B cell (primary cell): ENCODE measurements at regions of chr14 and their contacts with region 1.

Region 1: GRCh38 chr14:70714055-70714621 is 72.4 kb downstream of the TTC9 start:
- DNase-seq: peak; percentile 80
- ATAC-seq: peak; percentile 31
- H3K4me3 ChIP-seq: no peak overlapping the region
- H3K4me3 Mint-ChIP-seq: peak overlapping the region; percentile 0
- H3K27ac ChIP-seq: no peak overlapping the region
- H3K27ac Mint-ChIP-seq: peak overlapping the region; percentile 0
- H3K4me1 ChIP-seq: peaks cover 21 to 26% of the 10 kb centered on the region in 2 donors
- H3K4me1 Mint-ChIP-seq: peaks cover 37% of the 10 kb centered on the region
- H3K27me3 ChIP-seq: no peaks in the 10 kb centered on the region
- H3K27me3 Mint-ChIP-seq: no peaks in the 10 kb centered on the region
- CTCF ChIP-seq: peak; percentile 91

Region 2: DNA sequence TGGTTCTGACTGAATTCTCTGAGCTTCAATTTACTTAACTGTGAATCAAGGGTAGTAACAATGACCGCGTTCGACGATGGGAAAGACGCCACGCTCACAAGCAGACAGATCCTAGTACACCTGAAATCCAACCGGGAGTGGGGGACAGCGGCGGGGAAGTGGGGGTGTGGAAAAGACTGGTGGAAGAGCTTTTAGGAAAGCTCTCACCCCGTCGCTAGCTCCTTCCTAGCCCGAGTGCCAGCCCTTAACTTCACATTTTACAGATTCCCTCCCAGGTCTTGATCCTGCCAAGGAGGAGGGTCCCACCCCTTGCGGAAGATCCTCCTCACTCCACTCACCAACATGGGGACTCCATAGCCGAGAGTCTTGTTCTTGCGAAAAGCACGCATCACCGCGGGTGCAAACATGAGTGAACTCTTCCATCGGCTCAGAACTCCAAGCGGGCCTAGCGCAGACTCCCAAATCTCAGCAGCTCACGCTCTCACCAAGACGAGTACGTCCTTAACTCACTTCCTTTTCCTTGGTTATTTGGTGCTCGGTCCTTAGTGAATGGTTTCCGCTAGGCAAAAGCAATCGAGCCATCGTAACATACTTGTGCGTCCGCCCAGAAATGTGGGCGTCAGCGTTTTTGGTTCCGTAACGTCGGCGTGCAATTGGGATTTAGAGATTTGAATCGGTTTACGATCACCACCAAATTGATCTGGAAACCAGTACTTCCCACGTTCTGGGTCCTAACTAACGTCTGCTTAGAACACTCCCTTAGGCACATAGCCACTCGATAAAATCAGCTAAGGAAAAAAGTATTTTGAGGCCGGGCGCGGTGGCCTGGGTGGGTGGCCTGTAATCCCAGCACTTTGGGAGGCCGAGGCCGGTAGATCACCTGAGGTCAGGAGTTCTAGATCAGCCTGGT is 354.7 kb before region 1 on chr14 and contains the start of gene COX16:
- CTCF ChIA-PET with region 1: no interaction called
- POLR2A ChIA-PET with region 1: no interaction called
- intact Hi-C with region 1: no loop called
- DNase-seq: peak; percentile 92
- ATAC-seq: peak; percentile 94
- H3K4me3 ChIP-seq: peak within 1 kb of the TSS; percentile 83 to 98 (median 92)
- H3K4me3 Mint-ChIP-seq: peak within 1 kb of the TSS; percentile 100
- H3K27ac ChIP-seq: peak within 1 kb of the TSS; percentile 62 to 79
- H3K27ac Mint-ChIP-seq: peak within 1 kb of the TSS; percentile 97
- H3K4me1 ChIP-seq: peaks cover 11 to 15% of the 10 kb centered on the region in 2 donors
- H3K4me1 Mint-ChIP-seq: peaks cover 41% of the 10 kb centered on the region
- H3K27me3 ChIP-seq: peaks cover 0 to 3% (median 0%) of the 10 kb centered on the region in 4 experiments
- H3K27me3 Mint-ChIP-seq: peaks cover 10% of the 10 kb centered on the region
- CTCF ChIP-seq: no peak
- total RNA-seq, gene COX16: 24.6 and 31.2 TPM in 2 replicates

Region 3: GRCh38 chr14:70600382-70601157 is 113.6 kb before region 1 on chr14 and contains the start of gene MED6:
- CTCF ChIA-PET with region 1: interaction called, 16 read pairs
- POLR2A ChIA-PET with region 1: interaction called, 3 read pairs
- intact Hi-C with region 1: loop called (anchors 1 kb)
- DNase-seq: peak; percentile 93
- ATAC-seq: peak; percentile 98
- H3K4me3 ChIP-seq: peak within 1 kb of the TSS; percentile 67 to 100 (median 98)
- H3K4me3 Mint-ChIP-seq: peak within 1 kb of the TSS; percentile 99
- H3K27ac ChIP-seq: peak within 1 kb of the TSS; percentile 69 to 94
- H3K27ac Mint-ChIP-seq: peak within 1 kb of the TSS; percentile 97
- H3K4me1 ChIP-seq: peaks cover 25 to 26% of the 10 kb centered on the region in 2 donors
- H3K4me1 Mint-ChIP-seq: peaks cover 27% of the 10 kb centered on the region
- H3K27me3 ChIP-seq: no peaks in the 10 kb centered on the region
- H3K27me3 Mint-ChIP-seq: no peaks in the 10 kb centered on the region
- CTCF ChIP-seq: no peak
- total RNA-seq, gene MED6: 68.3 and 71.0 TPM in 2 replicates

Region 4: GRCh38 chr14:70631951-70632350 is 82.2 kb before region 1 on chr14:
- CTCF ChIA-PET with region 1: interaction called, 21 read pairs
- POLR2A ChIA-PET with region 1: no interaction called
- intact Hi-C with region 1: no loop called
- DNase-seq: no peak
- ATAC-seq: no peak
- H3K4me3 ChIP-seq: no peak overlapping the region
- H3K4me3 Mint-ChIP-seq: no peak overlapping the region
- H3K27ac ChIP-seq: no peak overlapping the region
- H3K27ac Mint-ChIP-seq: no peak overlapping the region
- H3K4me1 ChIP-seq: peaks cover 9 to 15% of the 10 kb centered on the region in 2 donors
- H3K4me1 Mint-ChIP-seq: peaks cover 12% of the 10 kb centered on the region
- H3K27me3 ChIP-seq: no peaks in the 10 kb centered on the region
- H3K27me3 Mint-ChIP-seq: no peaks in the 10 kb centered on the region
- CTCF ChIP-seq: no peak

Region 5: GRCh38 chr14:70665191-70665916 is 48.8 kb before region 1 on chr14:
- CTCF ChIA-PET with region 1: interaction called, 27 read pairs
- POLR2A ChIA-PET with region 1: interaction called, 3 read pairs
- intact Hi-C with region 1: loop called (anchors 2 kb)
- DNase-seq: peak; percentile 75
- ATAC-seq: peak; percentile 61
- H3K4me3 ChIP-seq: peak overlapping the region in 3 of 5 experiments; percentile 13 to 41 (median 16)
- H3K4me3 Mint-ChIP-seq: peak overlapping the region; percentile 65
- H3K27ac ChIP-seq: peak overlapping the region; percentile 79 to 89
- H3K27ac Mint-ChIP-seq: peak overlapping the region; percentile 89
- H3K4me1 ChIP-seq: peaks cover 94 to 100% of the 10 kb centered on the region in 2 donors
- H3K4me1 Mint-ChIP-seq: peaks cover 97% of the 10 kb centered on the region
- H3K27me3 ChIP-seq: no peaks in the 10 kb centered on the region
- H3K27me3 Mint-ChIP-seq: no peaks in the 10 kb centered on the region
- CTCF ChIP-seq: no peak

Region 6: GRCh38 chr14:70700952-70701585 is 13.1 kb before region 1 on chr14:
- CTCF ChIA-PET with region 1: interaction called, 10 read pairs
- POLR2A ChIA-PET with region 1: interaction called, 3 read pairs
- intact Hi-C with region 1: no loop called
- DNase-seq: no peak
- ATAC-seq: no peak
- H3K4me3 ChIP-seq: no peak overlapping the region
- H3K4me3 Mint-ChIP-seq: no peak overlapping the region
- H3K27ac ChIP-seq: no peak overlapping the region
- H3K27ac Mint-ChIP-seq: no peak overlapping the region
- H3K4me1 ChIP-seq: no peaks in the 10 kb centered on the region
- H3K4me1 Mint-ChIP-seq: no peaks in the 10 kb centered on the region
- H3K27me3 ChIP-seq: no peaks in the 10 kb centered on the region
- H3K27me3 Mint-ChIP-seq: no peaks in the 10 kb centered on the region
- CTCF ChIP-seq: no peak

Region 7: GRCh38 chr14:70771781-70772212 is 57.7 kb after region 1 on chr14:
- CTCF ChIA-PET with region 1: no interaction called
- POLR2A ChIA-PET with region 1: no interaction called
- intact Hi-C with region 1: no loop called
- DNase-seq: no peak
- ATAC-seq: no peak
- H3K4me3 ChIP-seq: no peak overlapping the region
- H3K4me3 Mint-ChIP-seq: no peak overlapping the region
- H3K27ac ChIP-seq: no peak overlapping the region
- H3K27ac Mint-ChIP-seq: no peak overlapping the region
- H3K4me1 ChIP-seq: no peaks in the 10 kb centered on the region
- H3K4me1 Mint-ChIP-seq: no peaks in the 10 kb centered on the region
- H3K27me3 ChIP-seq: no peaks in the 10 kb centered on the region
- H3K27me3 Mint-ChIP-seq: no peaks in the 10 kb centered on the region
- CTCF ChIP-seq: no peak

Region 8: DNA sequence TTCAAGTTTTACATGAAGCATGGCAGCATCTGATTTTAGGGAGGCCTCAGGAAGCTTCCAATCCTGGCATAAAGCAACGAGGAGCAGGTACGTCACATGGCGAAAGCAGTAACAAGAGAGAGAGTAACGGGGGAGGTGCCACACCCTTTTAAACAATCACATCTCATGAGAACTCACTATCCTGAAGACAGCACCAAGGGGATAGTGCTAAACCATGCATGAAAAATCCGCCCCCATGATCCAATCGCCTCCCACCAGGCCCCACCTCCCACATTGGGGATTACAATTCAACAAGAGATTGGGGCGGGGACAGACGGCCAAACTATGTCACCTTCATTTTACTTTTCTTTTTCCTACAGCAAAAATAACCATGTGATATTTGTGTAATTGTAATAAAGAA is 102.4 kb after region 1 on chr14:
- CTCF ChIA-PET with region 1: interaction called, 52 read pairs
- POLR2A ChIA-PET with region 1: no interaction called
- intact Hi-C with region 1: loop called (anchors 1 kb)
- DNase-seq: no peak
- ATAC-seq: no peak
- H3K4me3 ChIP-seq: no peak overlapping the region
- H3K4me3 Mint-ChIP-seq: no peak overlapping the region
- H3K27ac ChIP-seq: no peak overlapping the region
- H3K27ac Mint-ChIP-seq: no peak overlapping the region
- H3K4me1 ChIP-seq: peaks cover 15 to 23% of the 10 kb centered on the region in 2 donors
- H3K4me1 Mint-ChIP-seq: peaks cover 18% of the 10 kb centered on the region
- H3K27me3 ChIP-seq: peaks cover 0 to 19% (median 16%) of the 10 kb centered on the region in 4 experiments
- H3K27me3 Mint-ChIP-seq: peaks cover 25% of the 10 kb centered on the region
- CTCF ChIP-seq: no peak

Region 9: DNA sequence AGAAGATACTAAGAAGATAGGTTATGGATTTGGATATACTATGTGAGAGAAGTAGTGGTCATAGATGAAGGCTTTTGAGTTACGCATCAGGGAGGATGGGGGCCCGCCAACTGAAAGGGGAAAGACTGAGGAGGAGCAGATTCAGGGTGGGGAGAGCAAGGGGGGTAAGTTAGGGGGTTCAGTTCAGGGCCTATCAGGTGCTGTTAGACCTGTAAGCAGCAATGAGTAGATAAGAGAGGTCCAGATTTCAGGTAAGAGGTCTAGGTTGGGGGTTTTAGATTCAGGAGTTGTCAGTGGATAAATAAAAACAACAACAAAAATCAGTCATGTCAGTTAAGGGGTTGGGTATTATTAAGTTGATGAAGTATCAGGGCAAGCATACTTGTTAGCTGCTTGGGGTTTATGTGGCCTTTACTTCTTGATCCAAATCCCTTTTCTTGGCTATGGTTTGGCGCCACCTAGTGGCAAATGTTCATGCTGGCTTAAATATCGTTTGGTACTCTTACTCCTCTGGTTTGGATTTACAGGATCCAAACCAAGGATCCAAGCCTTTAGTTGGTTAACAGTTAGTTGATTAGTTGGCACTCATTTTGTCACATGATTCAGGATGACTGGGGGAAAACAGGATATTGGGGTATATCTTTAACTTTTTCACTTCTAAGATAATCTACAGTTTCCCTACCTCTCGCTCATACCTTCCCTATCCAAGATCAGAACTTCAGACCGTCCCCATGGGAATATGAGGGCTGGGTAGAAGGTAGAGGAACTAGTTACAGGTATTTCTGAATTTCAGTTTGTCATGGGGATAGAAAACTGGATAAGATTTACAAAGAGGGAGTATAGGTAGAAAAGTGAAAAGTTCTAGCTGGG is 258.2 kb after region 1 on chr14:
- CTCF ChIA-PET with region 1: interaction called, 4 read pairs
- POLR2A ChIA-PET with region 1: no interaction called
- intact Hi-C with region 1: loop called (anchors 1 kb)
- DNase-seq: peak; percentile 87
- ATAC-seq: peak; percentile 75
- H3K4me3 ChIP-seq: no peak overlapping the region
- H3K4me3 Mint-ChIP-seq: no peak overlapping the region
- H3K27ac ChIP-seq: no peak overlapping the region
- H3K27ac Mint-ChIP-seq: no peak overlapping the region
- H3K4me1 ChIP-seq: no peaks in the 10 kb centered on the region
- H3K4me1 Mint-ChIP-seq: peaks cover 1% of the 10 kb centered on the region
- H3K27me3 ChIP-seq: no peaks in the 10 kb centered on the region
- H3K27me3 Mint-ChIP-seq: no peaks in the 10 kb centered on the region
- CTCF ChIP-seq: peak; percentile 94